Activated naive CD4-positive, alpha-beta T cell treated with anti-CD3 and anti-CD28 coated beads for 36 hours (primary cell): ENCODE measurements at regions of chr14 and their contacts with region 1.

Region 1: GRCh38 chr14:22570132-22570949 is 18.7 kb downstream of the DAD1 start:
- DNase-seq: peak; percentile 93
- H3K4me3 Mint-ChIP-seq: peak overlapping the region; percentile 85
- H3K27ac Mint-ChIP-seq: peak overlapping the region; percentile 97
- H3K4me1 Mint-ChIP-seq: peaks cover 68% of the 10 kb centered on the region
- H3K27me3 Mint-ChIP-seq: no peaks in the 10 kb centered on the region

Region 2: DNA sequence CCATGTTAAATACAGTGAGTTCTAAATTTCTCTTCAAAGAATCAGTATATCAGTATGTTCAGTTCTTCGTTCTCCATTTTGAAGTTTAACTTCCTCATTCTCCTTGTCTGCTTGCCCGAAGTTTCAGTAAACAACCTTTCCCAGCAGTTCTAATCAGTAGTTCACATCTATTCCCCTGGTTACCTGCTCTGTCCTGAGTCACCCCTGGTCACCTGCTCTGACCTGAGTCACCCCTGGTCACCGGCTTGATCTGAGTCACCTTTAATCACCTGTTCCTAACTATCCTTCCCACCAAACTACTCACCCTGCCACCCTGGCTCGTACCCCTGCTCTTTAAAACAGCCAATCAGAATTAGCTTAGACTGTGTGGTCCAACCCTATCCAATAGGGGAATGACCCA is 981.0 kb before region 1 on chr14:
- CTCF ChIA-PET with region 1: no interaction called
- intact Hi-C with region 1: no loop called
- DNase-seq: no peak
- H3K4me3 Mint-ChIP-seq: no peak overlapping the region
- H3K27ac Mint-ChIP-seq: no peak overlapping the region
- H3K4me1 Mint-ChIP-seq: no peaks in the 10 kb centered on the region
- H3K27me3 Mint-ChIP-seq: no peaks in the 10 kb centered on the region

Region 3: GRCh38 chr14:21643407-21643806 is 926.9 kb before region 1 on chr14:
- CTCF ChIA-PET with region 1: no interaction called
- intact Hi-C with region 1: loop called (anchors 2 kb)
- DNase-seq: no peak
- H3K4me3 Mint-ChIP-seq: peak overlapping the region; percentile 47
- H3K27ac Mint-ChIP-seq: peak overlapping the region; percentile 75
- H3K4me1 Mint-ChIP-seq: peaks cover 3% of the 10 kb centered on the region
- H3K27me3 Mint-ChIP-seq: peaks cover 6% of the 10 kb centered on the region

Region 4: GRCh38 chr14:21882226-21882625 is 688.1 kb before region 1 on chr14:
- CTCF ChIA-PET with region 1: interaction called, 4 read pairs
- intact Hi-C with region 1: loop called (anchors 1 kb)
- DNase-seq: no peak
- H3K4me3 Mint-ChIP-seq: no peak overlapping the region
- H3K27ac Mint-ChIP-seq: no peak overlapping the region
- H3K4me1 Mint-ChIP-seq: peaks cover 4% of the 10 kb centered on the region
- H3K27me3 Mint-ChIP-seq: no peaks in the 10 kb centered on the region

Region 5: GRCh38 chr14:22221508-22221907 is 348.8 kb before region 1 on chr14:
- CTCF ChIA-PET with region 1: interaction called, 3 read pairs
- intact Hi-C with region 1: loop called (anchors 1 kb)
- DNase-seq: no peak
- H3K4me3 Mint-ChIP-seq: peak overlapping the region; percentile 69
- H3K27ac Mint-ChIP-seq: peak overlapping the region; percentile 72
- H3K4me1 Mint-ChIP-seq: peaks cover 7% of the 10 kb centered on the region
- H3K27me3 Mint-ChIP-seq: no peaks in the 10 kb centered on the region

Region 6: GRCh38 chr14:22589096-22589839 is 18.9 kb after region 1 on chr14 and contains the start of gene DAD1:
- CTCF ChIA-PET with region 1: interaction called, 135 read pairs
- intact Hi-C with region 1: loop called (anchors 1 kb)
- DNase-seq: peak; percentile 100
- H3K4me3 Mint-ChIP-seq: peak within 1 kb of the TSS; percentile 98
- H3K27ac Mint-ChIP-seq: peak within 1 kb of the TSS; percentile 99
- H3K4me1 Mint-ChIP-seq: peaks cover 68% of the 10 kb centered on the region
- H3K27me3 Mint-ChIP-seq: no peaks in the 10 kb centered on the region
- total RNA-seq, gene DAD1: 219 to 226 TPM

Region 7: GRCh38 chr14:22713631-22713950 is 143.2 kb after region 1 on chr14:
- CTCF ChIA-PET with region 1: no interaction called
- intact Hi-C with region 1: loop called (anchors 1 kb)
- DNase-seq: no peak
- H3K4me3 Mint-ChIP-seq: peak overlapping the region; percentile 84
- H3K27ac Mint-ChIP-seq: peak overlapping the region; percentile 63
- H3K4me1 Mint-ChIP-seq: peaks cover 13% of the 10 kb centered on the region
- H3K27me3 Mint-ChIP-seq: peaks cover 11% of the 10 kb centered on the region

Region 8: DNA sequence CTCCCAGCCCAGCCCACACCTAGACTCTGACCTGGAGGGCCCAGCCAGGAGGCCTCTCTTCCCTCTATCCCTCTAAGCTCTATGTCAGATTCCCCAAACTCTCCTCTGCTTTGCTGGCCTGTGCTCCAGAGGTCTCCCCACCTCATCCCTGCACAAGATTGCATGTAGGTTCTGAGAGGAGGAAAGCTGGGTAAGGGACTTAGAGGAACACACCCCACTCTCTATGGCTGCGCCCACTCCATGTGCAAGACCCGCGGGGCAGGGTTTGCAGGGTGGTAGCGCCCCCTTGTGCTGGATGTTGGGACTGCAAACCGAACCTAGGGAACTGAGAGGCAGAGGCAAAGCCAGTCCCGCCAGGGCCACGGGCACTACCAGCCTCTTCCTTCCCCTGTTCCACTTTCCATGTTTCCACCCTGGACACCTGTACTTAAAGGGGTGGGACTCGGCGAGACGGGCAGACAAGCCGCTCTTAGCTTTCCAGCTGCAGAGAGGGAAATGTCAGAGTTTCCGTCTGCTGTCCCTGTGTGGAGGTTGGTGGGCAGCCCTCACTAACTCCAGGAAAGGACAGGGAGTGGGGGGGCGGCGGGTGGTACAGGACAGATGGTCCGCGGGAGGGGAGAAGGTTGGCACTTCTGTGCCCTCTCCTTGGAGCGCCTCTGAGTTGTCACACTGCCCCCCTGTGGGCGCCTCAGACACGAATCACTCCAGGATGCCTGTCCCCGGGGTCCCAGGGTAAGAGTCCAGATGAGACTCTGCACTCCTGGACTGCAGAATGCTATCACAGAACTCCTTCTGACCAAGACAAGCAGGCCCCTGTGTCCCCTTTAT is 282.8 kb after region 1 on chr14:
- CTCF ChIA-PET with region 1: interaction called, 71 read pairs
- intact Hi-C with region 1: loop called (anchors 1 kb)
- DNase-seq: peak; percentile 95
- H3K4me3 Mint-ChIP-seq: peak overlapping the region; percentile 72
- H3K27ac Mint-ChIP-seq: peak overlapping the region; percentile 84
- H3K4me1 Mint-ChIP-seq: peaks cover 24% of the 10 kb centered on the region
- H3K27me3 Mint-ChIP-seq: no peaks in the 10 kb centered on the region